ENCODE measurements at regions of chr5 and their contacts with region 1.

Region 1: DNA sequence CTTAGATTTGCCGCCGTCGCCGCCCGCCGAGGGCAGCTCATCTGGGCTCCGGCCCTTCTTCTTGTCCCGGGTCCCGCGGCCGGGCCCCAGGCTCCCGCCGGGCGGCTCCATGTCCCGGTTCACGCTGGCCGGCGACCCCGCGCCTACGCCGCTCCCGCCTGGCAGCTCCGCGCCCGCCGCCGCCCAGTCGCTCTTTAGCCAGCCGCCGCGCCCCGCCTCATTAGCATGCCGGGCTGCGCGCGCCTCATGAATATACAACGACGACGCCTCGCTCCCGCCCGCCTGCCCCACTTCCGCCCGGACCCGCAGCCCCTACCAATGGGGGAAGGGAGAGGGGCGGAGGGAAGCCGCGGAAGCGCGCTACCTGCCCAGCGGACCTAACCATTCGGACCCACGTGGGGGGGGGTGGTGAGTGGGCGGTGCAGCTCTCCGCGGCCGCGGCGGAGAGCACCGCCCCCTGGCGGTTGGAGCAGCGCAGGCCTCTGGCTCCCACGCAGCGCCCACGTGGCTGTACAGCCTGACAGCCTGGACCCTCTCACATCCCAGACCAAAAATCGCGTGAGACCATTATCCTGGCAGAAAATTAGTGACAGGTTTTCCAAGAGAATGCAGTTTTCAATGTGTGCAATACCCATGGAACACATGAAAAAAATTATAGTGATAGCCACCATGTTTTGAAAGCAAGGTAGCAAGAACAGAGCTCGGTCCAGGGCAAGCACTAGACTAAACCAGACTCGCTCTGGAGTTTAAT is at the start of gene DIAPH1:
- DNase-seq: peak; percentile 99
- H3K4me3 Mint-ChIP-seq: peak within 1 kb of the TSS; percentile 98
- H3K27ac Mint-ChIP-seq: peak within 1 kb of the TSS; percentile 99
- H3K4me1 Mint-ChIP-seq: peaks cover 60% of the 10 kb centered on the region
- H3K27me3 Mint-ChIP-seq: no peaks in the 10 kb centered on the region
- total RNA-seq, gene DIAPH1: 165 to 169 TPM

Region 2: DNA sequence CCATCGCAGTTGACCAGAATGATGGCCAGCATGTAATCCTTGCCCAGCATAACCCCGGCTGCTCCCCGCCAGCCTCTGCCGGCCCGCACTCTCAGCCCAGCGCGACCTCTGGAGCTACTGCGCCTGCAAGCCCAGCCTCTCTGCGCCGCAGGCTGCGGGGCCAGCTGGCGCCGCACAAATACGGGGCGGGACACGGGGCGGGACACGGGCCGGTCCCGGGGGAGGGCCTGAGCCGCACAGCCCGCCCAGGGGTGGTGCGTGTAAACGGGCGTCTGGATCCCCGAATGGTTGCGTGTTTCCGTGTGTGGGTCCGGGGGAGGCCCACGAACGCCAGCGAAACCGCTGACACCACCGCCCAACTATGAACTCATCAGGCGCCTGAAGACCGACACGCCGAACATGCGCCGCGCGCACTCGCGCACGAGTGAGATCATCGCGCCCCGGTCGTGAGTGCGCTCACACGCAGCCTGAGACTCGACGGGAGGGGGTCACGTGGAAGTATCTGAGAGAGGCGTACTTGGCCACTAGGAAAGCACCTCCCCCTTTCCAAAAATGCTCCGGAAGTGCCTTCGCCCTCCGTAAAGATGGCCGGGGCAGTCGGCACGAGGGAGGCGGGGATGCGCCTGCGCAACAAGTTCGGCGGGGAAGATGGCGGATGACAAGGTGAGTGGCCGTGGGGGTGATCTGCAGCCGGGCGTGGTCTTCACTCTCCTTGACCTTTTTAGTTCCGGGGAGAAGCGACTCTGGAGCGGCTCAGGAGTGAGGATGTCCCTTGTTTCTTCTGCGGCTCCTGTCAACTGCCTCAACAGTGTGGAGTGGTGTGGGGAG is 1054.6 kb before region 1 on chr5 and contains the starts of genes APBB3 and SLC35A4:
- CTCF ChIA-PET with region 1: no interaction called
- intact Hi-C with region 1: loop called (anchors 5 kb)
- DNase-seq: peak; percentile 97
- H3K4me3 Mint-ChIP-seq: peak within 1 kb of the TSS; percentile 96
- H3K27ac Mint-ChIP-seq: peak within 1 kb of the TSS; percentile 93
- H3K4me1 Mint-ChIP-seq: peaks cover 53% of the 10 kb centered on the region
- H3K27me3 Mint-ChIP-seq: no peaks in the 10 kb centered on the region
- total RNA-seq, gene APBB3: 15.4 to 16.5 TPM
- total RNA-seq, gene SLC35A4: 57.1 to 60.1 TPM

Region 3: GRCh38 chr5:141320225-141321169 is 298.5 kb before region 1 on chr5 and contains the start of gene TAF7:
- CTCF ChIA-PET with region 1: no interaction called
- intact Hi-C with region 1: loop called (anchors 1 kb)
- DNase-seq: peak; percentile 95
- H3K4me3 Mint-ChIP-seq: peak within 1 kb of the TSS; percentile 97
- H3K27ac Mint-ChIP-seq: peak within 1 kb of the TSS; percentile 99
- H3K4me1 Mint-ChIP-seq: peaks cover 25% of the 10 kb centered on the region
- H3K27me3 Mint-ChIP-seq: no peaks in the 10 kb centered on the region
- total RNA-seq, gene TAF7: 57.0 to 57.9 TPM

Region 4: DNA sequence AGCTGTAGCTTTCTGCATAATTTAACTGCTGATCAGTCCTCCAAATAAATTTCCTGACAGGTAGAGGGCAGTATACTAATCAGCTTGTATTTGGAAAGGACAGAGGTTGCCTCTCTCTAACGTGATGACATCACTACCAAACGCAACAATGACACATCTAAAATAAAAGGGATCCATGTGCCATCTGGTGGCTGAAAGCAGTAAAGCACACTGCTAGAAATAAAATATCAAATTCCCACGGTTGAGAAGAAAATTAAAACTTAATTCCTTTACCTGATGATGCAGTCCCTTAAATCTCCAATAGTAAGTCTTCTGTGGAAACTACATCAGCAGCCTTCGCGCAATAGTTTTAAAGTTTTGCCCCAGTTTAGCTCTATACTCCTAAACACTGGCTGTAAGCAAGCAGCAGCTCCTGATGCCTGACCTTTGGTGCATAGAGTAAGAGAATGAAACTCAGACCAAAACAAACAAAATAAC is 54.7 kb before region 1 on chr5:
- CTCF ChIA-PET with region 1: interaction called, 26 read pairs
- intact Hi-C with region 1: loop called (anchors 1 kb)
- DNase-seq: peak; percentile 80
- H3K4me3 Mint-ChIP-seq: no peak overlapping the region
- H3K27ac Mint-ChIP-seq: peak overlapping the region; percentile 77
- H3K4me1 Mint-ChIP-seq: peaks cover 22% of the 10 kb centered on the region
- H3K27me3 Mint-ChIP-seq: no peaks in the 10 kb centered on the region

Region 5: GRCh38 chr5:141605523-141606277 is 13.3 kb before region 1 on chr5:
- CTCF ChIA-PET with region 1: interaction called, 52 read pairs
- intact Hi-C with region 1: loop called (anchors 1 kb)
- DNase-seq: peak; percentile 83
- H3K4me3 Mint-ChIP-seq: peak overlapping the region; percentile 32
- H3K27ac Mint-ChIP-seq: peak overlapping the region; percentile 90
- H3K4me1 Mint-ChIP-seq: peaks cover 87% of the 10 kb centered on the region
- H3K27me3 Mint-ChIP-seq: no peaks in the 10 kb centered on the region

Region 6: DNA sequence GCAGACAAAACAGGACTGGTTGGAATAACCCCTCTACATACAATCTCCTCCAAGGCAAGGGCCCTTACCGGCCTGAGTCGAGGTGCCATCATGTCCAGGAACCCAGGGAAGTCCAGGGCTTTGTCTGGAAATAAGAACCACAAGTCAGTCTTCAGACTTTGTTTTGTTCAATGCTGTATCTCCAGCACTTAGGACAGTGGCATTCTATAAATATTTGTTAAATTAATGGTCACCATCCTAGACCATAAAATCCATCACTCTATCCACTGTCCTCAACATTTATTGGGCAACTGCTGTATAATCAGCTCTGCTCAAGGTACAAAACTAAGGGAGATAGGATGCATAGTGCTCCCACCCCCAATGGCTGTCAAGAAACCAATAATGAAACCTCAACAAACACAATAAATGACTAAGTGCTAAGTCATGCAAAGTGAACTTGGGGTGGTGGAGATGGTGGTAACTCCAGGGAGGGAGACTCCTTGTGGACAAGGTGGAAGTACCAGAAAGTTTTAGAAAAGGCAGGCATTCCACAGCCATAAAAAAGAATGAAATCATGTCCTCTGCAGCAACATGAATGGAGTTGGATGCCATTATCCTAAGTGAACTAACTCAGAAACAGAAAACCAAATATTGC is 22.8 kb after region 1 on chr5:
- CTCF ChIA-PET with region 1: interaction called, 36 read pairs
- intact Hi-C with region 1: loop called (anchors 1 kb)
- DNase-seq: peak; percentile 40
- H3K4me3 Mint-ChIP-seq: no peak overlapping the region
- H3K27ac Mint-ChIP-seq: peak overlapping the region; percentile 39
- H3K4me1 Mint-ChIP-seq: peaks cover 30% of the 10 kb centered on the region
- H3K27me3 Mint-ChIP-seq: no peaks in the 10 kb centered on the region

Region 7: DNA sequence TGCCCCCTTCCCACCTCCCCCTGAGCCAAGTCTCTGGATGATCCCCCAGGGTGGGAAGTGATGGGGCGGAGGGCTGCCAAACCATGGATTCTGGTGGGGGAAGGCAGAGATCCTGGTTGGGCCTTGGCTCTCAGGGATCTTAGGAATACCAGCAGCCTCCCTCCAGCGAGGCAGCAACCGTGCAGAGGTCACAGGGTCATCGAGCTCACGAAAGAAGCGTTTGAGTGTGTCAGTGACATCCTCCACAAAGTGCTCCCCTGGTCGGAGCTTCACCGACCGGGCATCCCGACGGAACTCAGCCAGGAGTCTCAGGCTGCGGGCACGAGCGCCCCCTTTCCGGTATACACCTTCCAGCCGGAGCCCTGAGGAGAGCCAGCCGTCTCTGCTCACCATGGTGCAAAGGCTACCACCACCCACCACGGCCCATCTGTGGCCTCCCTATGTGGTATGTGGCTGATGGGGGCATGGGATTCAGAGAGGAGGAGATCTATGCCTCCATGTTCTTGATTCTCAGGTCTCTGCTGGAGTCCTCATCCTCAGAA is 43.0 kb after region 1 on chr5:
- CTCF ChIA-PET with region 1: no interaction called
- intact Hi-C with region 1: no loop called
- DNase-seq: no peak
- H3K4me3 Mint-ChIP-seq: no peak overlapping the region
- H3K27ac Mint-ChIP-seq: no peak overlapping the region
- H3K4me1 Mint-ChIP-seq: peaks cover 2% of the 10 kb centered on the region
- H3K27me3 Mint-ChIP-seq: no peaks in the 10 kb centered on the region

Measured in activated naive CD4-positive, alpha-beta T cell treated with anti-CD3 and anti-CD28 coated beads for 36 hours (primary cell).